ENCODE measurements at regions of chr1 and their contacts with region 1.

Region 1: GRCh38 chr1:246753670-246754535 is 29.7 kb downstream of the SCCPDH start:
- DNase-seq: peak; percentile 26 to 74 (median 40)
- ATAC-seq: peak; percentile 71
- H3K4me3 ChIP-seq: no peak overlapping the region
- H3K4me3 Mint-ChIP-seq: no peak overlapping the region
- H3K27ac ChIP-seq: no peak overlapping the region
- H3K27ac Mint-ChIP-seq: no peak overlapping the region
- H3K4me1 ChIP-seq: no peaks in the 10 kb centered on the region
- H3K4me1 Mint-ChIP-seq: no peaks in the 10 kb centered on the region
- H3K27me3 ChIP-seq: no peaks in the 10 kb centered on the region
- H3K27me3 Mint-ChIP-seq: no peaks in the 10 kb centered on the region
- CTCF ChIP-seq: peak; percentile 64

Region 2: DNA sequence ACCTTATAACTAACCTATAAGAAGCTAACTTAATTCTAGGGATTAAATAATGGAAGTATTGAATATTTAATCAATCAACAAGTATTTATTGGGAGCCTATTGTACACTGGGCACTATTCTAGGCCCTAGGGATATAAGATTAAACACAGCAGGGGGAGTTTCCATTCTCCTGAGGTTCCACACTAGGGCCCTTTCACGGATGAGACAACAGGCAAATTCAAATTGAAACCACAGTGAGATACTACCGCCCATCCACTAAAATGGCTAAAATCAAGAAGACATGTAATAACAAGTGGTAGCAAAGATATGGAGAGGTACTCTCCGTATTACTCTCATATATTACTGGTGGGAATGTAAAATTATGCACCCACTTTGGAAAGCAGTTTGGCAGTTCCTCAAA is 924.7 kb before region 1 on chr1:
- CTCF ChIA-PET with region 1: no interaction called
- POLR2A ChIA-PET with region 1: no interaction called
- intact Hi-C with region 1: no loop called
- DNase-seq: no peak
- ATAC-seq: no peak
- H3K4me3 ChIP-seq: no peak overlapping the region
- H3K4me3 Mint-ChIP-seq: no peak overlapping the region
- H3K27ac ChIP-seq: no peak overlapping the region
- H3K27ac Mint-ChIP-seq: no peak overlapping the region
- H3K4me1 ChIP-seq: no peaks in the 10 kb centered on the region
- H3K4me1 Mint-ChIP-seq: no peaks in the 10 kb centered on the region
- H3K27me3 ChIP-seq: no peaks in the 10 kb centered on the region
- H3K27me3 Mint-ChIP-seq: no peaks in the 10 kb centered on the region
- CTCF ChIP-seq: no peak

Region 3: DNA sequence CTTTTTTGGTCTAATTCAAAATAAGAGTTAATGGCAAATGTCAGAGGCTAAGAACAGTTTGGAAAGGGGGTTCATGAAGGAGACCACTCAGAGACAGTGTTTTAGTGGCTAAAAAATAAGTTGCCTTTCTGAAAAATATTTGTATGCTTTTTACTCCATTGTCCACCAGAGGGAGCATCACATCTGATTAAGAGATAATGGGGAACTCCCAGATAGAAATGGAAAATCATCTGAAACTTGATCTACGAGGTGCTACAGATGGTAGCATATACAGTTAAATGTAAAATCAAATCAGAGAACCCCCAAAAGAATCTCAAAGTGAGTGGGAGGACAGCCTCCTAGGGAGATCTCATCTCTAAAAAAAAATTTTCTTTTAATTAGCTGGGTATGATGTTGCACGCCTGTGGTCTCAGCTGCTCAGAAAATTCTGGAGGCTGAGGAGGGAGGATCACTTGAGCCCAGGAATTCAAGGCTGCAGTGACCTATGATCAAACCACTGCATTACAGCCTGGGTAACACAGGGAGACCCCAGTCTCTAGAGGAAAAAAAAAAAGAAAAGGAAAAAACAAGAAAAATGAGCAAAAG is 256.5 kb before region 1 on chr1:
- CTCF ChIA-PET with region 1: interaction called, 3 read pairs
- POLR2A ChIA-PET with region 1: no interaction called
- intact Hi-C with region 1: loop called (anchors 1 kb)
- DNase-seq: peak in 4 of 14 experiments; percentile 31 to 84 (median 81)
- ATAC-seq: peak; percentile 78
- H3K4me3 ChIP-seq: no peak overlapping the region
- H3K4me3 Mint-ChIP-seq: no peak overlapping the region
- H3K27ac ChIP-seq: no peak overlapping the region
- H3K27ac Mint-ChIP-seq: no peak overlapping the region
- H3K4me1 ChIP-seq: no peaks in the 10 kb centered on the region
- H3K4me1 Mint-ChIP-seq: peaks cover 17% of the 10 kb centered on the region
- H3K27me3 ChIP-seq: no peaks in the 10 kb centered on the region
- H3K27me3 Mint-ChIP-seq: no peaks in the 10 kb centered on the region
- CTCF ChIP-seq: peak; percentile 75

Region 4: GRCh38 chr1:246689409-246690008 is 64.4 kb before region 1 on chr1:
- CTCF ChIA-PET with region 1: no interaction called
- POLR2A ChIA-PET with region 1: no interaction called
- intact Hi-C with region 1: loop called in 1 of 2 experiments (anchors 5 kb)
- DNase-seq: peak in 9 of 14 experiments; percentile 6 to 73 (median 22)
- ATAC-seq: peak; percentile 85
- H3K4me3 ChIP-seq: no peak overlapping the region
- H3K4me3 Mint-ChIP-seq: no peak overlapping the region
- H3K27ac ChIP-seq: no peak overlapping the region
- H3K27ac Mint-ChIP-seq: peak overlapping the region; percentile 17
- H3K4me1 ChIP-seq: peaks cover 6% of the 10 kb centered on the region
- H3K4me1 Mint-ChIP-seq: peaks cover 5% of the 10 kb centered on the region
- H3K27me3 ChIP-seq: peaks cover 0 to 2% of the 10 kb centered on the region in 2 experiments
- H3K27me3 Mint-ChIP-seq: no peaks in the 10 kb centered on the region
- CTCF ChIP-seq: peak; percentile 62

Region 5: GRCh38 chr1:246699095-246699735 is 54.7 kb before region 1 on chr1:
- CTCF ChIA-PET with region 1: no interaction called
- POLR2A ChIA-PET with region 1: no interaction called
- intact Hi-C with region 1: loop called in 1 of 2 experiments (anchors 5 kb)
- DNase-seq: peak; percentile 58 to 90 (median 70)
- ATAC-seq: peak; percentile 89
- H3K4me3 ChIP-seq: peak overlapping the region; percentile 19
- H3K4me3 Mint-ChIP-seq: peak overlapping the region; percentile 70
- H3K27ac ChIP-seq: no peak overlapping the region
- H3K27ac Mint-ChIP-seq: no peak overlapping the region
- H3K4me1 ChIP-seq: peaks cover 17% of the 10 kb centered on the region
- H3K4me1 Mint-ChIP-seq: peaks cover 6% of the 10 kb centered on the region
- H3K27me3 ChIP-seq: no peaks in the 10 kb centered on the region
- H3K27me3 Mint-ChIP-seq: peaks cover 4% of the 10 kb centered on the region
- CTCF ChIP-seq: peak; percentile 80